AG04450 (cell line): ENCODE measurements at regions of chr7 and their contacts with region 1.

Region 1: GRCh38 chr7:24572997-24573625 is at the start of gene PALS2:
- DNase-seq: no peak
- H3K4me3 ChIP-seq: peak within 1 kb of the TSS; percentile 74
- H3K27ac ChIP-seq: no peak within 1 kb of the TSS
- H3K27me3 ChIP-seq: peaks cover 18% of the 10 kb centered on the region
- CTCF ChIP-seq: no peak
- polyA plus RNA-seq, gene PALS2: 9.2 and 11.6 TPM in 2 replicates

Region 2: DNA sequence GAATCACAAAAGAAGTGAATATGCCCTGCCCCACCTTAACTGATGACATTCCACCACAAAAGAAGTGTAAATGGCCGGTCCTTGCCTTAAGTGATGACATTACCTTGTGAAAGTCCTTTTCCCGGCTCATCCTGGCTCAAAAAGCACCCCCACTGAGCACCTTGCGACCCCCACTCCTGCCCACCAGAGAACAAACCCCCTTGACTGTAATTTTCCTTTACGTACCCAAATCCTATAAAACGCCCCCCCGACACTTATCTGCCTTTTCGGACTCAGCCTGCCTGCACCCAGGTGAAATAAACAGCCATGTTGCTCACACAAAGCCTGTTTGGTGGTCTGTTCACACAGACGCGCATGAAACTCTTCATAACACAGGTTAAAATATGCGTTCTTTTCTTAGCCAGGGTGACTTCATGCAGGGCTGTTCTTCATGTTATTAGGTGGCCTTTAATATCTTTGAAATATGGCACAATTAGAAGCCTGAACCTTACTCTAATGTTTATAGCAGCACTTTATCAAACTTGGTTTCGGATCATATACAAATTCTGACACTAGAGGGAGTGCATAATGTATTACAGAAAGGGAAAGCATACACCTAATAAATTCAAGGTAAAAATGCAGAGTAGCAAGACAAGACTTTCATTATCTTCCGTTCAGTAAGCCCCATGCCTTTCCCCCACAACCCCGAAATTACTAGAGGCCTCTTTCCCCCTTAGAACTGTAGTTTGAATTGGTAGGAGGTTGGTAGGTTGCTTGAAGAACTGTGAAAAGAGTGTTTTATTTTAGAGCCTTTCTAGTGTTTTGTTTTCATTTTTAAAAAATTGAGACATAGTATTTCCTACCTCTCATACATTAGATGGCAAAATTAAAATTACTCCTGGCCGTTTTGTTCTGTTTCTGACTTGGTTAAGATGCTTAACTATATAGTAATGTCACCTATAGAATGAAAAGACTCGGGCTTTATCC is 171.2 kb before region 1 on chr7:
- CTCF ChIA-PET with region 1: no interaction called
- POLR2A ChIA-PET with region 1: no interaction called
- DNase-seq: no peak
- H3K4me3 ChIP-seq: peak overlapping the region; percentile 26
- H3K27ac ChIP-seq: no peak overlapping the region
- H3K27me3 ChIP-seq: peaks cover 2% of the 10 kb centered on the region
- CTCF ChIP-seq: peak; percentile 57

Region 3: GRCh38 chr7:24595671-24596418 is 22.7 kb after region 1 on chr7:
- CTCF ChIA-PET with region 1: interaction called, 10 read pairs
- POLR2A ChIA-PET with region 1: no interaction called
- DNase-seq: no peak
- H3K4me3 ChIP-seq: no peak overlapping the region
- H3K27ac ChIP-seq: no peak overlapping the region
- H3K27me3 ChIP-seq: no peaks in the 10 kb centered on the region
- CTCF ChIP-seq: no peak

Region 4: DNA sequence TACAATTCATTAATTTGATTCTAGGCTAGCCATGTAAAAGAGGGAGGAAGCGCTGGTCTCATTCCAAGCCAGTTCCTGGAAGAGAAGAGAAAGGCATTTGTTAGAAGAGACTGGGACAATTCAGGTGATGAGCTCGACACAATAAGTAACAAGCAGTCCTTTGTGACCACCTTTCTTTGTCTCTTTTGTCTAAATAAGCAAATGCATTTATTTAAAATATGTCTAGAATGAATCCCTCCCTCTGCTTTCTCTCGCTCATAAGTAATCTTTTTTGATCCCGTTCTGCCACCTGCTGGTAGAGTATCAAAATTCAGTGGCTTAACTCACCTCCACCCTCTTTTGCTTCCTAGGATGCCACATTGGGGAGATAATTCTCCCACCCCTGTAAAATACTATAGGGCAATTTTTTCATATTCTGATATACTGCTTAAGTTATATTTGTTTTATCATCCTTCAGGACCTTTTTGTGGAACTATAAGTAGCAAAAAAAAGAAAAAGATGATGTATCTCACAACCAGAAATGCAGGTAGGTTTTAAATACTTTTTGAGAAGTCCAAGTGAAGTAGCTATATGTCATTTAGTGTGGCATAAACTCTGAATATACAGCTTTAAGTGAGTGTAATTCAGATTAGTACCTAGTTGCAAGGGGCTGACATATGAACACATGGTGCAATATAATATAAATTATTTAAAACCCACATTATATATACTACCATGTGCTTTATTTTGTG is 92.6 kb after region 1 on chr7:
- CTCF ChIA-PET with region 1: interaction called, 95 read pairs
- POLR2A ChIA-PET with region 1: interaction called, 5 read pairs
- DNase-seq: peak; percentile 29
- H3K4me3 ChIP-seq: no peak overlapping the region
- H3K27ac ChIP-seq: no peak overlapping the region
- H3K27me3 ChIP-seq: no peaks in the 10 kb centered on the region
- CTCF ChIP-seq: peak; percentile 67

Region 5: DNA sequence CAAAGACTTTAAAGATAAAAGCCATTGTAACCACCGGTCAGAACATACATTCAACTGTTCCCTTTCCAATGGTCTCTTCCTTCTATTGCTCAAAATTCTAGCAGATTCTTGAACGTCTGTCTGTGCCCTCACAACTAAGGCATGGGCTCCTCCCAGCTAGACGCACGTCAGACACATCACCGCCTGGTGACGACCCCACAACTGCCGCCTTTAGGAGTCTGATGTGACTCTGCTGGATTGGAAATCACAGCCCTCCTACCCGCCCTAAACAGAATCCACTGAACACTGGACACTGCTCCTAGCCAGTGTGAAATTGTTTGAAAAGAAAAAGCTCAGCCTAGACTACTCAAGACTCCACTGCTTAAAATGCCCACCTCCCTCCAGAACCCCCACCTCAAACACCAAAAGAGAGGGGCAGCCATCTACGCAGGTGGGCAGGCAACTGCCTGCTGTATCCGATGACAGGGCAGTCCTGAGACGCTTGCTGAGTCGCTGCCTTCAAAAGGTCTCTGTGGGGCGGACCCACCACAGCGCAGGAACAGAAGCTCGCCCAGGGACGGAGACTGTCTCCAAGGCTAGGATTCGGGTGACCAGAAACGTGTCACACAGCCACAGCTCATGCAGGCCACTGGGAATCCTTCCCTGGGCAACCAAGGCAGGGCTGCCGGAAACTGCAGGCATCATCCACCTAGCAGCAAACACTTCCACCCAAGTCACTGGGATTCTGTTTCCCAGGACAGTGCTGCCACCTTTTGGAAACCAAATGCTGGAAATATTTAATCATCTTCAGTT is 149.5 kb after region 1 on chr7:
- CTCF ChIA-PET with region 1: interaction called, 20 read pairs
- POLR2A ChIA-PET with region 1: no interaction called
- DNase-seq: no peak
- H3K4me3 ChIP-seq: no peak overlapping the region
- H3K27ac ChIP-seq: peak overlapping the region; percentile 11
- H3K27me3 ChIP-seq: no peaks in the 10 kb centered on the region
- CTCF ChIP-seq: peak; percentile 59